HEK293 (cell line): ENCODE measurements at regions of chr10 and their contacts with region 1.

Region 1: DNA sequence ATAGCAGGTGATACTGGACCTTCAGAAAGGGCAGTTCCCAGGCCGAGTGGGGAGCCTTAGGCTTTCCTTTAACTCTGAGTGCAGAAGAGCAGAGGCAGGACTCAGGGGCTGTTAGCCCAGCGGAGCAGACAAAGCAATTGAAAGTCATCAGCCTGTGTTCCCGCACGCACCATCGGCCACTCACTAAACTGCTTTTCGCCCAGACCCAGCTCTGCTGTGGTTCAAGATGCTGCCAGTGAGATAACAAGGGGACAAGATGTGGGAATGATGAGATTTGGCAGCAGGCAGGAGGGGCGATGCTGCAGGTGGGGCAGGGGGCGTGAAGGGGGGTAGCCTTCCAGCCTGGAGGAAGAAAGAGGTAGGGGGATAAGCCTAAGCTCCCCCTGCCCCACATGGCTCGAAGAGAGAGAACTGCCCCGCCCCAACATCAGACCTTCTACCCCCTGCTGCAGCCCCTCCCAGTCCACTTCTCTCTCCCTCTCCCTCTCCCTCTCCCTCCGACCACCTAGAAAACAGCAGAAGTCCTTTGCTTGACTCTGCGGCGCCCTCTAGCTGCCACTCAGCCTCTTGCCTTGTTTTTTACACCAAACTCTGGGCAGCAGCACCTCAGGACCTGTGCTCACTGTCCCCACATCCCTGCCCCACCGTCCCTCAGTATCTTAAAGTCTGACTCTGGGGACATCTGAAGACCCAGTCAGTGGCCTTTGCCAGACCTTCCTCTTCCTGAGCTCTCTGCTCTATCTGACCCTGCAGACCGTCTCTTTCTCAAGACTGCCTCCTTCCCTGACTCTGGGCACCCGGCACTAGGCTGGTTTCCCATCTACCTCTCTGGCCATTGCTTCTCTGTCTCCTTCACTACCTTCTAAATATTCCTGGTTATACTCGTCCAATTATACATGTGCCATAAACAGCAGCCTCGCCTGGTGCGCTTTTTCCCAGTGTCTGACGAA is 110.5 kb downstream of the C10orf105 start:
- H3K4me3 ChIP-seq: no peak overlapping the region
- H3K27ac ChIP-seq: no peak overlapping the region
- H3K4me1 ChIP-seq: 0 out of 2 replicates have a peak, but pooled peaks cover 2% of the 10 kb centered on the region
- CTCF ChIP-seq: peak; percentile 91

Region 2: GRCh38 chr10:71319042-71319799 is 289.9 kb before region 1 on chr10 and contains the start of gene SLC29A3:
- CTCF ChIA-PET with region 1: interaction called, 13 read pairs
- POLR2A ChIA-PET with region 1: no interaction called
- H3K4me3 ChIP-seq: peak within 1 kb of the TSS; percentile 70
- H3K27ac ChIP-seq: no peak within 1 kb of the TSS; the same call in 1 of the 2 replicates
- H3K4me1 ChIP-seq: no peaks in the 10 kb centered on the region
- CTCF ChIP-seq: peak; percentile 97

Region 3: GRCh38 chr10:71383972-71384687 is 225.0 kb before region 1 on chr10:
- CTCF ChIA-PET with region 1: interaction called, 23 read pairs
- POLR2A ChIA-PET with region 1: no interaction called
- H3K4me3 ChIP-seq: no peak overlapping the region
- H3K27ac ChIP-seq: no peak overlapping the region
- H3K4me1 ChIP-seq: no peaks in the 10 kb centered on the region
- CTCF ChIP-seq: peak; percentile 83

Region 4: GRCh38 chr10:71584902-71585563 is 24.1 kb before region 1 on chr10:
- CTCF ChIA-PET with region 1: interaction called, 15 read pairs
- POLR2A ChIA-PET with region 1: no interaction called
- H3K4me3 ChIP-seq: no peak overlapping the region
- H3K27ac ChIP-seq: no peak overlapping the region
- H3K4me1 ChIP-seq: no peaks in the 10 kb centered on the region
- CTCF ChIP-seq: no peak

Region 5: GRCh38 chr10:71597821-71598498 is 11.1 kb before region 1 on chr10:
- CTCF ChIA-PET with region 1: interaction called, 17 read pairs
- POLR2A ChIA-PET with region 1: no interaction called
- H3K4me3 ChIP-seq: no peak overlapping the region
- H3K27ac ChIP-seq: no peak overlapping the region
- H3K4me1 ChIP-seq: no peaks in the 10 kb centered on the region
- CTCF ChIP-seq: no peak

Region 6: GRCh38 chr10:71638064-71638821 is 29.1 kb after region 1 on chr10:
- CTCF ChIA-PET with region 1: interaction called, 17 read pairs
- POLR2A ChIA-PET with region 1: no interaction called
- H3K4me3 ChIP-seq: no peak overlapping the region
- H3K27ac ChIP-seq: no peak overlapping the region
- H3K4me1 ChIP-seq: no peaks in the 10 kb centered on the region
- CTCF ChIP-seq: no peak

Region 7: DNA sequence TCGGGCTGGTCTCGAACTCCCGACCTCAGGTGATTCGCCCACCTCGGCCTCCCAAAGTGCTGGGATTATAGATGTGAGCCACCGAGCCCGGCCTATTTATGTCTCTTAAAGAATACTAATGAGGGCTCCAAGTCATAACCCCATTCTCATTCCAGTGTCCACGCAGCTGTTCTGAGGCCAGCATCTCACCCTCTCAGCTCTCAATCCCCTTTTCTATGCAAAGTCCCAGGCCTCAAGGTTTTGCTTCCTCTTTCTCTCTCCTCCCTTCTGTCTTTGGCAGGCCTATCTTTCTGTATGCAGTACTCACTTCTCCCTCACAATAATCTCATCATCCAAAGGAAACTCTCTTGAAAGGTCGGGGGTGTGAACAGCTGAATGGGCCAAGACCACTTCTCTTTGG is 192.3 kb after region 1 on chr10:
- CTCF ChIA-PET with region 1: no interaction called
- POLR2A ChIA-PET with region 1: no interaction called
- H3K4me3 ChIP-seq: no peak overlapping the region
- H3K27ac ChIP-seq: no peak overlapping the region
- H3K4me1 ChIP-seq: no peaks in the 10 kb centered on the region
- CTCF ChIP-seq: no peak